T-cell (primary cell): ENCODE measurements at regions of chr3 and their contacts with region 1.

Region 1: GRCh38 chr3:172129870-172130683 is 90.7 kb downstream of the FNDC3B start:
- DNase-seq: peak in 31 of 35 experiments; percentile 10 to 71 (median 39)
- ATAC-seq: peak; percentile 48 to 73 (median 57)
- H3K4me3 ChIP-seq: no peak overlapping the region
- H3K4me3 Mint-ChIP-seq: peak overlapping the region in 2 of 3 donors; percentile 4 to 29
- H3K27ac ChIP-seq: peak overlapping the region; percentile 76
- H3K27ac Mint-ChIP-seq: peak overlapping the region; percentile 9 to 79
- H3K4me1 ChIP-seq: peaks cover 2 to 17% of the 10 kb centered on the region in 2 experiments
- H3K4me1 Mint-ChIP-seq: peaks cover 54 to 65% (median 55%) of the 10 kb centered on the region in 3 donors
- H3K27me3 ChIP-seq: no peaks in the 10 kb centered on the region
- H3K27me3 Mint-ChIP-seq: no peaks in the 10 kb centered on the region

Region 2: DNA sequence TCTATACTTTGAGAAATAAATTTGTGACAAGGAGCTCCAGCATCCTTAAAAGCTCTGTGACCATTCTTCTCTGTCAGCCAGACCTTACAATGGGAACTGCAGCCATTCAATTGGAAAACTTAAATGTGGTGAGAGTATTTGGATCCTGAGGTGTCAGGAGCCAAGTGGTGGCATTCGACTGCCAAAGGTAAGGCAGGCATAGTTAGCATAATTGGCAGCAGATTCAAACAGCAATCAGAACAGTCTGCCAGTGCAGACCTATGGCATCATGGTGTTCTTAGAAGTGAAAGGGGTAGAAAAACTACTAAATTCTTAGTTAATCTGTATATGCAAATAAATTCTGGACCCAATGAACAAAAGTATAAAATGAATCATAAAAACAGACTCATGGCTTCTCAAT is 108.9 kb before region 1 on chr3:
- CTCF ChIA-PET with region 1: no interaction called
- POLR2A ChIA-PET with region 1: no interaction called
- DNase-seq: no peak
- ATAC-seq: no peak
- H3K4me3 ChIP-seq: no peak overlapping the region
- H3K4me3 Mint-ChIP-seq: no peak overlapping the region
- H3K27ac ChIP-seq: no peak overlapping the region
- H3K27ac Mint-ChIP-seq: no peak overlapping the region
- H3K4me1 ChIP-seq: no peaks in the 10 kb centered on the region
- H3K4me1 Mint-ChIP-seq: no peaks in the 10 kb centered on the region
- H3K27me3 ChIP-seq: no peaks in the 10 kb centered on the region
- H3K27me3 Mint-ChIP-seq: peaks cover 0 to 1% of the 10 kb centered on the region in 2 donors

Region 3: DNA sequence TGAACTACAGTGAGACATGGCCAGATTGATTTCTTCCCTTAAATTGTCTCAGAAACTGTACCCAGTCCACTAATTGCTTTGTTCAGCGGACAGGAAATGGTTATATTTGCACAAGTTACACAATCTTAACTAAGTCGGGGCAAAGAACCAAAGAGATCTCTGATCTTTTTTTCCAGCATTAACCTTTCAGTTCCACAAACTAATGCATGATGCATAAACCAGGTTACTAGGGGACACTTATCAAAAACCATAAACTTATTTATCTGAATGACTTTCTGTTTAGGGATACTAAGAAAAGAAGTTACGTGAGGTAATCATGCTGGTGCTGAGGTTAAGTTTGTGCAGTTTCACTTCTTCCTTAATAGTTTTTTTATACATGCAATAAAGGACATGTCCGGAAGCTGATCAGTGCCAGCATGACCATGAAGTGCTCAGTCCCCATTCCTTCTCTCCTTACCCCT is 68.3 kb before region 1 on chr3:
- CTCF ChIA-PET with region 1: no interaction called
- POLR2A ChIA-PET with region 1: no interaction called
- DNase-seq: no peak
- ATAC-seq: no peak
- H3K4me3 ChIP-seq: no peak overlapping the region
- H3K4me3 Mint-ChIP-seq: no peak overlapping the region
- H3K27ac ChIP-seq: no peak overlapping the region
- H3K27ac Mint-ChIP-seq: no peak overlapping the region
- H3K4me1 ChIP-seq: peaks cover 0 to 2% of the 10 kb centered on the region in 2 experiments
- H3K4me1 Mint-ChIP-seq: peaks cover 33 to 56% (median 36%) of the 10 kb centered on the region in 3 donors
- H3K27me3 ChIP-seq: no peaks in the 10 kb centered on the region
- H3K27me3 Mint-ChIP-seq: no peaks in the 10 kb centered on the region

Region 4: DNA sequence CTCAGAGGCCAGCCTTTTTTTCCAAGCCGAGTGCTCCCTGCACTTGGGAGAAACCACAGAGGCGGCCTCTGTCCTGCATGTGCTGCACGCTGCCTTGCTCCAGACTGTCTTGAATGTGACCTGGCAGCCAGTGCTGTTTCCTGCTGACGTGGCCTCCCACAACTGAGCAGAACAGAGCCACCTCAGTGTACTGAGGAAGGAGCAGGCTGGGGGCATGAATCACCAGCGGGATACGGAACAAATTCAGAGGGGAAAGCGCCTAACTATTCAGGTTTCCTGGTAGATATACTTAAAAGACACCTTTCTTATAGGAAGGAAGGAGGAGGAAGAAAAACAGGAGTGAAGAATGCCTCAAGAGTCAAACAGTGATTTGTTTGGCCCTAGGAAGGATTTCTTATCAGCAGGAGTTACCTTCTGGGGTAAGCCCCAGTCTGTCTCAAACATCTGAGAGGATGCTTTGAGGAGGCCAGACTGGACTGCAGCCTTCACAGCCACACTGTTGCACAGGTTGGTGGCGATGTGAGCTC is 23.3 kb after region 1 on chr3:
- CTCF ChIA-PET with region 1: no interaction called
- POLR2A ChIA-PET with region 1: no interaction called
- DNase-seq: peak in 21 of 35 experiments; percentile 8 to 51 (median 24)
- ATAC-seq: peak; percentile 77 to 99 (median 88)
- H3K4me3 ChIP-seq: no peak overlapping the region
- H3K4me3 Mint-ChIP-seq: peak overlapping the region in 2 of 3 donors; percentile 15 to 16
- H3K27ac ChIP-seq: no peak overlapping the region
- H3K27ac Mint-ChIP-seq: peak overlapping the region in 1 of 2 donors; percentile 77
- H3K4me1 ChIP-seq: peaks cover 2 to 12% of the 10 kb centered on the region in 2 experiments
- H3K4me1 Mint-ChIP-seq: peaks cover 29 to 49% (median 45%) of the 10 kb centered on the region in 3 donors
- H3K27me3 ChIP-seq: peaks cover 0 to 2% of the 10 kb centered on the region in 2 experiments
- H3K27me3 Mint-ChIP-seq: no peaks in the 10 kb centered on the region

Region 5: GRCh38 chr3:172177046-172177445 is 47.0 kb after region 1 on chr3:
- CTCF ChIA-PET with region 1: interaction called in 1 of 2 experiments, 12 read pairs
- POLR2A ChIA-PET with region 1: interaction called in 1 of 2 experiments, 4 read pairs
- DNase-seq: no peak
- ATAC-seq: no peak
- H3K4me3 ChIP-seq: no peak overlapping the region
- H3K4me3 Mint-ChIP-seq: no peak overlapping the region
- H3K27ac ChIP-seq: no peak overlapping the region
- H3K27ac Mint-ChIP-seq: no peak overlapping the region
- H3K4me1 ChIP-seq: no peaks in the 10 kb centered on the region
- H3K4me1 Mint-ChIP-seq: peaks cover 13 to 36% (median 16%) of the 10 kb centered on the region in 3 donors
- H3K27me3 ChIP-seq: no peaks in the 10 kb centered on the region
- H3K27me3 Mint-ChIP-seq: no peaks in the 10 kb centered on the region